ENCODE measurements at regions of chr1 and their contacts with region 1.

Region 1: GRCh38 chr1:26864610-26865527 is 1.9 kb downstream of the SFN start:
- DNase-seq: peak; percentile 99
- H3K4me3 ChIP-seq: peak overlapping the region; percentile 38 to 64 (median 54)
- H3K27ac ChIP-seq: peak overlapping the region; percentile 89 to 98 (median 96)
- H3K4me1 ChIP-seq: peaks cover 0 to 22% (median 18%) of the 10 kb centered on the region in 4 donors
- H3K27me3 ChIP-seq: no peaks in the 10 kb centered on the region
- CTCF ChIP-seq: no peak
- EP300 ChIP-seq: no peak
- POLR2A ChIP-seq: peak; percentile 44 to 71

Region 2: DNA sequence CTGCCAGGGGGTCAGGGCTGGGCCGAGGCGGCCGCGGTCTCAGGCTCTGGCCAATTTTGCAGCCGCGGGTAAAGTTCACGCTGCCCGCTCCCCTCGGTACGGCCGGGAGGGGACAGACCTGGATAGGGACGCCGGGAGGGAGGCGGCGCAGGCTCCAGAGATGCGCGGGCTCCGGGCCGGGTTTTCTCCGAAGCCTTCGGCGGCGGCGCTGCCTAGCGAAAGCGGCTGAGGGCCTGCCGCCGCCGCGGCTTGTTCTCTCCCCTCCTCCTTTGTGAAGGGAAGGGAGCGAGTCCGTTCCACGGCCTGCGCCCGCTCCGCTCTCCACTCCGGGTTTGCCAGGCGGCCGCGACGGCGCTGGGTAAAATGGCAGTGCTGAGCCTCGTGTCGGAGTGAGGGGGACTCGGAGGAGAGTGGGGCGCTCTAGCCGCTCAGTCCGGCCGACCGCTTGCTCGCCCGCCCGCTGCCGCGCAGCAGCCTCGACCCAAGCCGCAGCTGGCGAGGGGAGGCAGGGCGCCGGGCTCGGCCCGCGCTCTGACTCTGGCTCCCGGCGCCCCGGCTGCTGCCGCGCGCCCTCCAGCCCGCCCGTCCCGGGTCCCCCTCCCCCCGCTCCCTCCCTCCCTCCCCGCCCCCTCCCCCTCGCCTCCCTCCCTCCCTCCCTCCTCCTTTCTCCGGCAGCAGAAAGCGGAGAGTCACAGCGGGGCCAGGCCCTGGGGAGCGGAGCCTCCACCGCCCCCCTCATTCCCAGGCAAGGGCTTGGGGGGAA is 169.3 kb before region 1 on chr1 and contains the start of gene ARID1A:
- intact Hi-C with region 1: loop called (anchors 10 kb)
- DNase-seq: peak; percentile 98
- H3K4me3 ChIP-seq: peak within 1 kb of the TSS; percentile 89 to 98 (median 96)
- H3K27ac ChIP-seq: peak within 1 kb of the TSS; percentile 96 to 99 (median 99)
- H3K4me1 ChIP-seq: peaks cover 11 to 65% (median 53%) of the 10 kb centered on the region in 4 donors
- H3K27me3 ChIP-seq: no peaks in the 10 kb centered on the region
- CTCF ChIP-seq: no peak
- EP300 ChIP-seq: peak in 1 of 4 donors; percentile 50
- POLR2A ChIP-seq: peak in 1 of 2 donors; percentile 29
- total RNA-seq, gene ARID1A: 20.7 to 47.1 (median 24.7) TPM

Region 3: DNA sequence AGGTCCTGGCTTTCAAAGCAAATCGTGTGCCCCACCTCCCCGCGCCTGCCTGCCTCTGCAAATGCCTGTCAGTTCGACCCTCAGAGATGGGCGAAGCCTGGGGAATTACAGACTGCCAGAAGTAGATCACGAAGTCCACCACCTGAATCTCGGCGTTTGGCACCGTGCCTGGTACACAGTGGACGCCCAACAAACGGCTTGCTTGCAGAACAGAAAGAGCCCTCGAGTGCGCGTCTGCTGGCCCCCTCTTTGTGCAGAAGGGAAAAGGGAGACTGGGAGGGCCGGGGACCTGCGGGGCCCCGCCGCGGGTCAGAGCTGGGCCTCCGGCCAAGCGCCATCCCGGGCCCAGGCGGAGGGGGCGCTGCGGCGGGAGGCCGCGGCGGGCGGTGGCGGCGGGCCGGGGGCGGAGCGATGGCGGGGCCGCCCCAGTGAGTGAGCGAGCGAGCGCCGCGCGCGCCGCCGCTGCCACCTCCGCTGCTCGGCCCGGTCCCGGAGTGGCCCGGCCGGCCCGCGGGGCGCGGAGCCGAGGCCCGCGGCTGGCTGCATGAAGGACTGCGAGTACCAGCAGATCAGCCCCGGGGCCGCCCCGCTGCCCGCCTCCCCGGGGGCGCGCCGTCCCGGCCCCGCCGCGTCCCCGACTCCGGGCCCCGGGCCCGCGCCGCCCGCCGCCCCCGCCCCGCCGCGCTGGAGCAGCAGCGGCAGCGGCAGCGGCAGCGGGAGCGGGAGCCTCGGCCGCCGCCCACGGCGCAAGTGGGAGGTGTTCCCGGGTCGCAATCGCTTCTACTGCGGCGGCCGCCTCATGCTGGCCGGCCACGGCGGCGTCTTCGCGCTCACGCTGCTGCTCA is 38.4 kb before region 1 on chr1 and contains the start of gene ZDHHC18:
- intact Hi-C with region 1: loop called (anchors 1 kb)
- DNase-seq: peak; percentile 82
- H3K4me3 ChIP-seq: peak within 1 kb of the TSS; percentile 68 to 90 (median 86)
- H3K27ac ChIP-seq: peak within 1 kb of the TSS; percentile 73 to 86 (median 83)
- H3K4me1 ChIP-seq: peaks cover 0 to 40% (median 33%) of the 10 kb centered on the region in 4 donors
- H3K27me3 ChIP-seq: no peaks in the 10 kb centered on the region
- CTCF ChIP-seq: peak; percentile 16 to 44 (median 28)
- EP300 ChIP-seq: no peak
- POLR2A ChIP-seq: no peak
- total RNA-seq, gene ZDHHC18: 7.5 to 13.6 (median 10.7) TPM

Region 4: GRCh38 chr1:26949926-26950319 is 85.1 kb after region 1 on chr1:
- intact Hi-C with region 1: no loop called
- DNase-seq: no peak
- H3K4me3 ChIP-seq: no peak overlapping the region
- H3K27ac ChIP-seq: no peak overlapping the region
- H3K4me1 ChIP-seq: no peaks in the 10 kb centered on the region
- H3K27me3 ChIP-seq: no peaks in the 10 kb centered on the region
- CTCF ChIP-seq: no peak
- EP300 ChIP-seq: no peak
- POLR2A ChIP-seq: no peak